GM12878 (cell line): ENCODE measurements at regions of chr5 and their contacts with region 1.

Region 1: DNA sequence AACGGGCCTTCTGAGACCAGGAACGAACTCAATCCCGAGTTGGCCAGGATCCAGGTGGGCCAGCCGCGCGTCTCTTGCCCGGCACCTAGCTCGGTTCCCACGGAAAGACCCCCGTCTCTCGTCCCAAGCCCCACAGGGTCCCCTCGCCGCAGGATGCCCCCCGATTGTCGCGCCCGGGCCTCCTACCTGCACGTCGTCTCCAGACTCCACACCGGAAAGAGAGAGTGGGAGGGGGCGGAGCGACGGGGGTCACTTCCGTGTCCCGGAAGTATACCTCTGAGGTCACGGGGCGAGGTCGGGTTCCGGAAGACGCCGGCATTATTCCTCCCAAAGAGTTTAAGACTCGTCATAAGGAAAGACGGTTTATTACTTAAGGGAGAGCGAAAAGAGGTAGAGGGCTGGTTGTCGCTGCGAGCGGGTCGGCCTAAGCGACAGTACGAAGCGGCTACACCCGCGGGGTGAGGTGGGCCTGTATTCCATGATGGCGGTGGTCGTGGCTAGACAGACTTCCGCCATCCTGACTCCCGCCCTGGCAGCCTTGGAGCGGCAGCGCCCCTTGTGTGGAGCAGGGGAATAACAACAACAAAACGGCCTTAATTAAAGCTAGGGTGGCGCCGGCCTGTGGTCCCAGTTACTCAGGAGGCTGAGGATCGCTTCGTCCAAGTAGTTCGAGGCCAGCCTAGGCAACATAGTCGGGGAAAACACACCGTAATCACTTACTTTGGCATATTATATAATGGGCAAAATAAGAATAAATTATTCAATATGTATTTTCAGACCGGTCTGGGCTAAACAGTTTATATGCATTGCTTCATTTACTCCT is at the start of gene RPS14:
- DNase-seq: peak; percentile 87
- ATAC-seq: peak; percentile 95
- H3K4me3 ChIP-seq: peak within 1 kb of the TSS; percentile 97
- H3K27ac ChIP-seq: peak within 1 kb of the TSS; percentile 99
- H3K4me1 ChIP-seq: peaks cover 2% of the 10 kb centered on the region; the same call in 1 of the 2 replicates
- H3K27me3 ChIP-seq: no peaks in the 10 kb centered on the region
- CTCF ChIP-seq: peak; percentile 86 to 95 (median 93)
- EP300 ChIP-seq: 0 out of 4 replicates have a peak, but pooled peaks of 1 of the 2 experiments have one; percentile 46
- POLR2A ChIP-seq: peak; percentile 99
- RAD21 ChIP-seq: peak; percentile 42; the same call in 1 of the 2 replicates
- polyA plus RNA-seq, gene RPS14: 2,295 to 2,356 TPM

Region 2: DNA sequence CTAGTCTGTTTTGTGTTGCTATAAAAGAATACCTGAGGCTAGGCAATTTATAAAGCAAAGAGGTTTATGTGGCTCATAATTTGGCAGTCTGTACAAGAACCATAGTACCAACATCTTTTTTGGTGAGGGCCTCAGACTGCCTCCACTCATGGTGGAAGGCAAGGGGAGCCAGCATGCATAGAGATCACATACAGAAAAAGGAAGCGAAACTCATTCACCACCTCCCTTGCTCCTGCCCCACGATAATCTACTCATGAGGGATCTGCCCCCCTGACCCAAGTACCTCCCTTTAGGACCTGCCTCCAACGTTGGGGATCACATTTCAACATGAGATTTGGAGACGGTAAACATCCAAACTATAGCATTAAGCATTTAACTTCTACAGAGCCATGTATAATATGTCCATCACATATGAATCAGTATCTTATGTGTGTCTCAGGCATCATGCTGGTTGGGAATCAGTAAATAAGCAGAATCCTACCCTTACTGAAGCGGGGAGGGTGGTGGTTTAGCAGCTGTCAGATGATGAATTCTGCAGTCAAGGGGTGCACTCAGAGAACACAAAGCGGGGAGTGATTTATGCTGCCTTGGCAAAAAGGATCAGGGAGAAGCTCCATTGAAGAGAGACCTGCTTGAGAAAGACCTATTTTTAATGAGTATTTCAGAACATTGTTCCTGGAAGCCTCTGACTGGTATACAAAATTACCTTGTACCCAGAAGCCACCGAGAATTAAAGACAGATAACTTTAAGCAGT is 414.4 kb before region 1 on chr5:
- CTCF ChIA-PET with region 1: no interaction called
- POLR2A ChIA-PET with region 1: no interaction called
- RAD21 ChIA-PET with region 1: no interaction called
- SMC1A ChIA-PET with region 1: no interaction called
- in situ Hi-C with region 1: no loop called
- intact Hi-C with region 1: no loop called
- DNase-seq: peak; percentile 42
- ATAC-seq: peak; percentile 100
- H3K4me3 ChIP-seq: no peak overlapping the region
- H3K27ac ChIP-seq: no peak overlapping the region
- H3K4me1 ChIP-seq: peaks cover 7% of the 10 kb centered on the region
- H3K27me3 ChIP-seq: no peaks in the 10 kb centered on the region
- CTCF ChIP-seq: no peak
- EP300 ChIP-seq: no peak
- POLR2A ChIP-seq: no peak
- RAD21 ChIP-seq: no peak

Region 3: DNA sequence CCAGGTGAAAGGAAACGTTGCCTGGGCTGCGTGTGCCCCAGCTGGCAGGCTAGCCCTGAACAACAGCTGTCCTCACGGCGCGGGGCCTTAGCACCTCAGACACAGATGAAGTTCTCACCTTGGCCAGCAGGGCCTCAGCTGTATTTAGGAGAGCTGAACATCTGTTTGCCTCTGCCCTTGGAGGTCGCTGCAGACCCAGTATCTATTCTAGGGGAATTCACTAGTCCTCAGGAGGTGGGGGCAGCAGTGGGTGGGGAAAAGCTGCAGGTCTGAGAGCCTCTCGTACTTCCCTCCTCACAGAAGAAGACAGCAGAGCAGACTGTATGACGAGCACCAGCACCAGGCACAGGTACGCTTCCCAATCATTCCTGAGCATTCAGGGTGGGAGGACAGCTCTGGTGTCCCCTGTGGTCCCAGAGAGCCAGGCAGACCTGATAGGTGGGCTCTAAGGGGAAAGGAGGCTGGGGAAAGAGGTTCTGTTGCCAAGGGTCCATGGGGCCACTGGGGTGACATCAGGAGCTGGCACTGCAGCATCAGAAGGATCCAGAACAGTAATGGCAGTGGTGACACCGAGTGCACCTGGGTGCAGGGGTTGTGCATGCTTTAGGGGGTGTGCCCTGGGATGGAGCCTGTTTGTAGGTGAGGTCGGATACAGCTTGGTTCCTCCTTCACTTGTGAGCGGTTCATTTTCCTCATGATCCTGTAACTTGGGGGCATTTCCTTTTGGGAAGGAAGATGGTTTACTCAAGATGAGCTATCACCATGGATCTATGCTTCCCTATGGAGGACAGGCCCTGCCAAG is 50.8 kb before region 1 on chr5:
- CTCF ChIA-PET with region 1: interaction called, 17 read pairs
- POLR2A ChIA-PET with region 1: interaction called, 4 read pairs
- RAD21 ChIA-PET with region 1: interaction called, 4 read pairs
- SMC1A ChIA-PET with region 1: interaction called, 4 read pairs
- in situ Hi-C with region 1: no loop called
- intact Hi-C with region 1: no loop called
- DNase-seq: no peak
- ATAC-seq: peak; percentile 66
- H3K4me3 ChIP-seq: no peak overlapping the region
- H3K27ac ChIP-seq: no peak overlapping the region
- H3K4me1 ChIP-seq: peaks cover 5% of the 10 kb centered on the region
- H3K27me3 ChIP-seq: no peaks in the 10 kb centered on the region
- CTCF ChIP-seq: peak; percentile 74 to 81 (median 77)
- EP300 ChIP-seq: no peak
- POLR2A ChIP-seq: peak; percentile 77
- RAD21 ChIP-seq: peak; percentile 71

Region 4: GRCh38 chr5:150436141-150436680 is 13.5 kb before region 1 on chr5:
- CTCF ChIA-PET with region 1: interaction called, 12 read pairs
- POLR2A ChIA-PET with region 1: interaction called, 3 read pairs
- RAD21 ChIA-PET with region 1: interaction called, 4 read pairs
- SMC1A ChIA-PET with region 1: interaction called, 4 read pairs
- in situ Hi-C with region 1: no loop called
- intact Hi-C with region 1: no loop called
- DNase-seq: peak; percentile 60
- ATAC-seq: peak; percentile 96
- H3K4me3 ChIP-seq: no peak overlapping the region
- H3K27ac ChIP-seq: no peak overlapping the region
- H3K4me1 ChIP-seq: peaks cover 5% of the 10 kb centered on the region
- H3K27me3 ChIP-seq: no peaks in the 10 kb centered on the region
- CTCF ChIP-seq: peak; percentile 80 to 94 (median 83)
- EP300 ChIP-seq: no peak
- POLR2A ChIP-seq: no peak
- RAD21 ChIP-seq: peak; percentile 87

Region 5: DNA sequence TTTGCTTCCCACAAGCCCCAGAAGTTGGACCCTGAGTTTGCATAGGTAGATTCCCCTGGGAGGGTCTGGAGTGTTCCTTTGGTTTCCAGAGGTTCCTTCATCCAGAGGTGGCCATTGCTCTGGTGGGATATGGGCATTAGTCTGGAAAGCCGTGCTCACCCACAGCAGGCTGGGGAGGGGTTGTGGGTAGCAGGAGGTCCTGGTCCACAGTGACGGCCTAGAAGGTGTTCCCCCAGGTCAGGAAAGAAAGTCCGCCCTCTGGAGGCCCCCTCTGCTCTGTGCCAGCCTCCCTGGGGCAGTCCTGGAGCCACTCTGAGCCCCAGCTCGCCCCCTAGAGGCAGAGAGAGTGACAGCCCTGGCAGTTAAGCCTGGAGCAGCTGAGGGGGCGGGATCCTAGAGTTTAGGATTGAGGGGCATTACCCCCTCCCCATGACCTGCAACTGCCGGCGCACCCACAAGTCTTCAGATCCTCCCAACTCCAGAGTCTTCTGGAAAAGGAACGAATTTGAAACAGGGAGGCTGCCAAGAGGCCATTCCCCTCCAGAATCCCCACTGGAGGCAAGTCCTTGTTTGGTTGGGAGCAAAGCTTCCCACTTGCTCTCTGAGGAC is 95.0 kb after region 1 on chr5:
- CTCF ChIA-PET with region 1: interaction called, 11 read pairs
- POLR2A ChIA-PET with region 1: no interaction called
- RAD21 ChIA-PET with region 1: interaction called, 4 read pairs
- SMC1A ChIA-PET with region 1: no interaction called
- in situ Hi-C with region 1: no loop called
- intact Hi-C with region 1: no loop called
- DNase-seq: peak; percentile 17
- ATAC-seq: peak; percentile 100
- H3K4me3 ChIP-seq: no peak overlapping the region
- H3K27ac ChIP-seq: no peak overlapping the region
- H3K4me1 ChIP-seq: no peaks in the 10 kb centered on the region
- H3K27me3 ChIP-seq: no peaks in the 10 kb centered on the region
- CTCF ChIP-seq: peak; percentile 96 to 99 (median 99); a peak in 5 of 6 replicates
- EP300 ChIP-seq: no peak
- POLR2A ChIP-seq: no peak
- RAD21 ChIP-seq: peak; percentile 87

Region 6: GRCh38 chr5:150656191-150657132 is 206.7 kb after region 1 on chr5:
- CTCF ChIA-PET with region 1: no interaction called
- POLR2A ChIA-PET with region 1: interaction called, 4 read pairs
- RAD21 ChIA-PET with region 1: no interaction called
- SMC1A ChIA-PET with region 1: no interaction called
- in situ Hi-C with region 1: loop called (anchors 10 kb)
- intact Hi-C with region 1: loop called (anchors 10 kb)
- DNase-seq: peak; percentile 11
- ATAC-seq: peak; percentile 84
- H3K4me3 ChIP-seq: peak overlapping the region; percentile 70; the same call in 1 of the 2 replicates
- H3K27ac ChIP-seq: no peak overlapping the region
- H3K4me1 ChIP-seq: peaks cover 7% of the 10 kb centered on the region
- H3K27me3 ChIP-seq: no peaks in the 10 kb centered on the region; a peak in 2 of 4 replicates
- CTCF ChIP-seq: peak; percentile 43 to 78 (median 75); a peak in 5 of 6 replicates
- EP300 ChIP-seq: no peak
- POLR2A ChIP-seq: peak; percentile 60
- RAD21 ChIP-seq: peak; percentile 76